ENCODE measurements at regions of chr3 and their contacts with region 1.

Region 1: DNA sequence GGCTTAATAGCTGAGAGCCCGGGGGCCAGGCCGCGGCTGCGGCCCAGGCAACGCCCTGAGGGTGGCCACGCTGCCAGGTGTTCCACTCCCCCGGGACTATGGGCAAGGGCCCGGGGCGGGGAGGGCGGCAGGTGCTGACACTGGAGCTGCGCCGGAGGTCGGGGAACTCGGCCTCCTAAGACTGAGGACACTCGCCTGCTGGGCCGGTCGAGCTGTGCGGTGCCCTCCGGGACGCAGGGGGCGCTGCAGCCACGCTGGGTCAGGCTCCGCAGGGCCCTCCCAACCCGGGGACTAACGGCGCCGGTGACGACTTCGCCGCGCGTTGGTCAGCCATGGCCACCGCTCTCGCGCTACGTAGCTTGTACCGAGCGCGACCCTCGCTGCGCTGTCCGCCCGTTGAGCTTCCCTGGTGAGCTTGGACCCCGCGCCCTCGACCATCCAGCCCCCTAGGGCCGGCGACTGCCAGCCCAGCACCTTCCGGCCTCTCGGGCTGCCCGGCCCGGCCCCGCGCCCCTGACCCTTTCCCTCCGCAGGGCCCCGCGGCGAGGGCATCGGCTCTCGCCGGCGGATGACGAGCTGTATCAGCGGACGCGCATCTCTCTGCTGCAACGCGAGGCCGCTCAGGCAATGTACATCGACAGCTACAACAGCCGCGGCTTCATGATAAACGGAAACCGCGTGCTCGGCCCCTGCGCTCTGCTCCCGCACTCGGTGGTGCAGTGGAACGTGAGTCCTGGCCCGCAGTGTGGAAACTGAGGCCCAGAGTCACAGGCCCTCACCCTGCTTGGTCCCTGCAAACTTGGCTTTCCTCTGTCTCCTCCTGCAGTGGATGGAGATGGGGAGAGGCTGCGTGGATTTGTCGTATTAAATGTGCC is at the start of gene NDUFAF3:
- DNase-seq: peak; percentile 94
- ATAC-seq: peak; percentile 74
- H3K4me3 Mint-ChIP-seq: peak within 1 kb of the TSS; percentile 97
- H3K27ac Mint-ChIP-seq: peak within 1 kb of the TSS; percentile 99
- H3K4me1 Mint-ChIP-seq: peaks cover 61% of the 10 kb centered on the region
- H3K27me3 Mint-ChIP-seq: no peaks in the 10 kb centered on the region
- total RNA-seq, gene NDUFAF3: 92.1 to 93.7 TPM

Region 2: DNA sequence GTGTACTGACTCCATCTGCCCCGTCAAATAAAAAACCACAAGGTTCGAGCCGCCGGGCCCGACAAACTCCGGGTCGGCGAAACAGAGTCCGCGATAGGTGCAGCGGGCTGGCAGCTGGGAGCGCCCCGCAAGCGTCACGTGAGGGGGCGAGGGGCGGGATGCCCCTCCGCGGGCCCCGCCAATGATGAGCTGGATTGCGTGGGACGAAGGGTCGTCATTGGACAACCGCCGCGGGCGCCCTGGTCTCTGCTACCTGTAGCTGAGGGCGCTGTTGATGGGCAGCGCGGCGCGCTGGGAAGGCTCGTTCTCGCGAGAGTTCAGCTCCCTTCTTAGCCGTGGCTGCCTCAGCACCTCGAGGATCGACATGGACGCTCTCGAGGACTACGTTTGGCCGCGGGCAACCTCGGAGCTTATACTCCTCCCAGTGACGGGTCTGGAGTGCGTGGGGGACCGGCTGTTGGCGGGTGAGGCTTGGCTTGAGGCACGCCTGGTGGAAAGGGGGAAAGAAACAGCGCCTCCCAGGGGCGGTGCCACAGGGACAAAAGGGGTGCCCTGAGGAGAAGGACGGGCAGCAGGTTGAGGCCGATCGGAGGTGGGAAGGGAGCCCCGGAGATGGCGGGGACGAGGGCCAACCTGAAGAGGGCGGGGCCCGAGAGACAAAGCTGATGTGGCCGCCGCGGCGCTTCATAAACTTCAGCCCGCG is 14.8 kb before region 1 on chr3 and contains the start of gene WDR6:
- CTCF ChIA-PET with region 1: interaction called, 92 read pairs
- POLR2A ChIA-PET with region 1: interaction called, 160 read pairs
- DNase-seq: peak; percentile 99
- ATAC-seq: peak; percentile 94
- H3K4me3 Mint-ChIP-seq: peak within 1 kb of the TSS; percentile 100
- H3K27ac Mint-ChIP-seq: peak within 1 kb of the TSS; percentile 100
- H3K4me1 Mint-ChIP-seq: peaks cover 31% of the 10 kb centered on the region
- H3K27me3 Mint-ChIP-seq: no peaks in the 10 kb centered on the region
- total RNA-seq, gene WDR6: 134 to 140 TPM

Region 3: GRCh38 chr3:49104483-49105291 is 82.6 kb after region 1 on chr3 and contains the start of gene QARS1:
- CTCF ChIA-PET with region 1: no interaction called
- POLR2A ChIA-PET with region 1: interaction called, 10 read pairs
- DNase-seq: peak; percentile 95
- ATAC-seq: peak; percentile 99
- H3K4me3 Mint-ChIP-seq: peak within 1 kb of the TSS; percentile 98
- H3K27ac Mint-ChIP-seq: peak within 1 kb of the TSS; percentile 94
- H3K4me1 Mint-ChIP-seq: peaks cover 43% of the 10 kb centered on the region
- H3K27me3 Mint-ChIP-seq: no peaks in the 10 kb centered on the region
- total RNA-seq, gene QARS1: 250 to 294 TPM

Measured in activated CD8-positive, alpha-beta T cell treated with anti-CD3 and anti-CD28 coated beads, Interleukin-2, amount 10 ng/mL, durations not matched to agents 7 days and 5 days (primary cell).